ENCODE measurements at regions of chr4 and their contacts with region 1.

Region 1: DNA sequence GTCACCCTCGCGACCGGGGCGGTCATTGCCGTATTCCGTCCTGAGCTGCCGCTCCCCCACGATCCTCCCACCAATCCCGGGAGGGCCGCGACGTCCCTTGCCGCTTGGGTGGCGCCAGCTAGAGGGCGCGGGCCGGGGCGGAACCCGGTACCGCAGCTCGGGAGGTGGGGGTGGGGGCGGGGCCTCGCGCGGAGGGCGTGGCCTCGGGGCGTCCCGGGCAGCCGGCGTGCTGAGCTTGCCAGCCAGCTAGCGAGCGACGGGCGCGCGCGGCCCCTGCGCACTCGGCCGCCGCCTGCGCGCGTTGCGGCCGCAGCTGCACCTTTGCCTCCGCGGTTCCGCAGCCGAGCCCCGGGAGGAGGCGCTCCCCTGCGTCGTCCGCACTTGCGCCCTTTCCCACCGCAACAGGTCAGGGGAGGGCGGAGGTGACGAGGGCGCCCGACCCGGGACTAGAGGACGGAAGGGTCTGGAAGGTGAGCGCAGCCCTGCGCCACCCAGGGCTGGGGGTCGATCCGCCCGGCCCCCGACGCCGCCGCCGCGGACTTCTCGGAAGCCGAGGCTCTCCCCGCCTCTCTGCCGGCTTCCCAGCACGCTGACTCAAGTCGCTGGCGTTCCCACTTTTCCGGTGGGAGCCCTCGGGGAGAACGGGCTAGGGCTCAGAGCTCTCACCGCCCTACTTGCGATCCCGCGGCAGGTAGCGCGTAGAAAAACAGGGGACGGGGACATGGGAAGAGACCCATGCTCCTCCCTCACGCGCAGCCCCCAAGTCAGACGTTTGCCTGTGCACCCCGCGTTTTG is at the start of gene AFF1:
- DNase-seq: no peak
- H3K4me3 ChIP-seq: peak within 1 kb of the TSS; percentile 83
- CTCF ChIP-seq: peak; percentile 59

Region 2: DNA sequence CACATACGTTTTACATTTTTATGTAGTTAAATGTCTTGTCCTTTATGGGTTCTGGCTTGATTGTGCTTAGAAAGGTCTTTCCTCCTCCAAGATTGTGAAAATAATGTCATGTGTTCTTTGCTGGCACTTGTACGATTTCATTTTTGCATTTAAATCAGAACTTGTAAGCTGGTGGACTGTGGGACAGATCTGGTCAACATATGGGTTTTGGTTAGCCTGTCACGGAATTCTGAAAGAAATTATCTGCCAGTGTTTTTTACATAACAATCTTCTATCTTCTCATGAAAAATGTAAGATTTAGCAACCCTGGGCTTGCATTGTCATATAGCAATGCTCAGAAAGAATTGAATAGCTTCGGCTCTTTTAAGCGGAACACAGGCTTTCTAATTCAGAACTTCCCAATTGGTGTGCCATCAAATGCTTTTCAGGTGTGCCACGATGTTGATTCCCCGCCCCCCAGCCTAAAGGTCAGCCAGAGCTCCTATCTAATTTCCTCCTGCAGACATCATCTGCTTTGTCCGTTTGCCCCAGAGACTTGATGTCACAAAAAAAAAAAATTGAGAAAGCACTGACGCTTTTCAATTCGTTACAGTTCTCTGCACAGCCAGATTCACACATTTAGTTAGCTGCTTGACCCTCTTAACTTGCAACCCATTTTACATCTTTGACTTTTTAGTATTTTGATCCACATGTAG is 16.0 kb after region 1 on chr4:
- CTCF ChIA-PET with region 1: interaction called, 12 read pairs
- POLR2A ChIA-PET with region 1: interaction called, 3 read pairs
- DNase-seq: no peak
- H3K4me3 ChIP-seq: no peak overlapping the region
- CTCF ChIP-seq: no peak

Region 3: DNA sequence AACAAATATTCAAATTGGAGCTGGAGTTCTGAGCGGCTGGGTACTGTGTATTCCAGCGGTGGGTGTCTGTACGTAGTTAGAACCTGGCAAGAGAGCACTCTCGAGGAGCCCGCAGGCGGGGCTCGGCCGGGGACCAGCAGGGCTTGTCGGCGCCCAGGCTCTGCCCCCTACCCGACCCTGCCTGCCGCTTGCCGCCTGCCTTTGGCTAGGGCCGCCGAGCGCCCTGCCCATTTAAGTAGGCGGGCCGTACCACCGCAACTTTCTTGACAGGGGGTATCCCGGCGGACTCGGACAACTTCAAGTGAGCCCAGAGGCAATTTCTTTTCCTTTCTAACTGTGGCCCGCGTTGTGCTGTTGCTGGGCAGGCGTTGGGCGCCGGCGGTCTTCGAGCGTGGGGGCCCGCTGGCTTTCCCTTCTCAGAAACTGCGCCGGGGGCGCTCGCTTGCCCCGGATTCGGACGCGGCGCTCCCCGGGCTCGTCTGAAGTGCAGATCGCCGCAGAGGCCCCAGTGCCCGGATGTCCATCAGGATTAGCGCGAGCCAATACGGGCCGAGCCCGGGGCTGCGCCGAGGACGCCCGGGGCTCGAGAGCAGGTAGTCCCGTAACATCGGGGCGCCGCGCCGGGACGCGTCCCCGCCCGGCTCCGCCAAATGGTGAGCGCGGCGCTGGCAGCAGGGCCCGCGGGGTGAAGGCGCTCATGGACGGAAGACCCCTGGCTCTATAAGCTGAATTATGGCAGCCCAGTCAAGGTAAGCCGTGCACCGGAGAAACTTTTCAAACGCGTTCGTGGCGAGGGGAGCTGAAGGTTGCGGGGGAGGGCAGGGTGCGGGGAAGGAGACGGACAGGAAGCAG is 71.9 kb after region 1 on chr4:
- CTCF ChIA-PET with region 1: interaction called, 4 read pairs
- POLR2A ChIA-PET with region 1: interaction called, 27 read pairs
- DNase-seq: peak; percentile 58
- H3K4me3 ChIP-seq: peak overlapping the region; percentile 79
- CTCF ChIP-seq: no peak